ENCODE measurements at regions of chr18 and their contacts with region 1.

Region 1: GRCh38 chr18:59127047-59127446 is 12.6 kb upstream of the SEC11C start:
- DNase-seq: no peak

Region 2: GRCh38 chr18:57991552-57991951 is 1135.5 kb before region 1 on chr18:
- intact Hi-C with region 1: loop called in 1 of 2 experiments (anchors 5 kb)
- DNase-seq: no peak

Region 3: DNA sequence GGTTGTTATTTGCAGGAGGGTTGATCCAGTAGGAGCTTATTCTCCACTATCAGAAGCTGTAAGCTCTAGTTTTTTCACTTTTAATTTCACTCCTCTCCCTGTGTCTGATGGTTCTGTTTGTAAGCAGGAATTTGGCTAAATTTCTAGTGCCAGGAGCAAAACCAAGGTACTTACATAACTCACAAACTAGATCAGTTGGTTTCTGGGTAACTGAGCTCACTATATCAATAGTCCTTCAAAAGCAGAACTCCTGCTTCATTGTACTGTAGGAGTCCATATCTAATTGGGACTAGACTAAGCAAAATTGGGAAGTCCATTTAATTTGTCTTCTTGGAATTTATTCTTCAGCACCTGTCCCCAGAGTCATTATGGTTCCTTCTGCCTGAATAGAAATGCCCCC is 166.3 kb after region 1 on chr18:
- intact Hi-C with region 1: no loop called
- DNase-seq: no peak

Region 4: GRCh38 chr18:59950215-59950944 is 823.3 kb after region 1 on chr18:
- intact Hi-C with region 1: no loop called
- DNase-seq: no peak

Measured in posterior vena cava (tissue), 2 donors.